Heart right ventricle (tissue), 16 donors: ENCODE measurements at regions of chr12 and their contacts with region 1.

Region 1: GRCh38 chr12:32761716-32762115 is 6.0 kb upstream of the YARS2 start:
- DNase-seq: no peak
- ATAC-seq: no peak
- H3K4me3 ChIP-seq: no peak overlapping the region
- H3K27ac ChIP-seq: no peak overlapping the region
- H3K4me1 ChIP-seq: peaks cover 0 to 5% (median 0%) of the 10 kb centered on the region in 9 donors
- H3K27me3 ChIP-seq: peaks cover 0 to 7% (median 0%) of the 10 kb centered on the region in 7 donors
- CTCF ChIP-seq: no peak

Region 2: DNA sequence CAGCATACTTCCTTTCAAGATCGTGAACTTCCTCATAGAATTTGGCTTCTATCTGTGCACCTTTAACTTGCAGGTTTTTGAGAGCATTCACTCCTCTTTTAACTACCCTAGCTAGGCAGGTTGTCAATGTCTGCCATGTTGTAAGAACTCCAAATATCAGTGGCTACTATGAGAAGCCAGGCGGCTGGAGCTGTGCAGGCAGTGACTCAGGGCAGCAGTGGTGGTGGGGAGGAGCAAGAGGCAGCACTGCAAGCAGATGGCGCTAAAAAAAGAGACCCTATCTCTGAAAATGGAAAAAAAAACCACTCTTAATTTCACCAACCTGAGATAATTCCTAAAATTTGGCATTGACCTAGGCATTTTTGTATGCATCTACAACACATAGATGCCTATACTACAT is 34.5 kb before region 1 on chr12:
- intact Hi-C with region 1: no loop called
- DNase-seq: no peak
- ATAC-seq: no peak
- H3K4me3 ChIP-seq: no peak overlapping the region
- H3K27ac ChIP-seq: no peak overlapping the region
- H3K4me1 ChIP-seq: peaks cover 0 to 10% (median 0%) of the 10 kb centered on the region in 9 donors
- H3K27me3 ChIP-seq: no peaks in the 10 kb centered on the region
- CTCF ChIP-seq: no peak

Region 3: GRCh38 chr12:32906407-32907165 is 144.9 kb after region 1 on chr12:
- intact Hi-C with region 1: loop called in 3 of 10 experiments (anchors 5 to 10 kb)
- DNase-seq: no peak
- ATAC-seq: no peak
- H3K4me3 ChIP-seq: no peak overlapping the region
- H3K27ac ChIP-seq: no peak overlapping the region
- H3K4me1 ChIP-seq: peaks cover 0 to 6% (median 0%) of the 10 kb centered on the region in 9 donors
- H3K27me3 ChIP-seq: no peaks in the 10 kb centered on the region
- CTCF ChIP-seq: no peak

Region 4: GRCh38 chr12:32918890-32919801 is 157.4 kb after region 1 on chr12:
- intact Hi-C with region 1: loop called in 8 of 10 experiments (anchors 1 to 10 kb)
- DNase-seq: peak in 1 of 2 donors; percentile 9
- ATAC-seq: peak in 5 of 8 donors; percentile 35 to 72 (median 67)
- H3K4me3 ChIP-seq: no peak overlapping the region
- H3K27ac ChIP-seq: peak overlapping the region in 1 of 10 donors; percentile 30
- H3K4me1 ChIP-seq: peaks cover 0 to 4% (median 0%) of the 10 kb centered on the region in 9 donors
- H3K27me3 ChIP-seq: no peaks in the 10 kb centered on the region
- CTCF ChIP-seq: peak; percentile 27 to 65 (median 55)

Region 5: GRCh38 chr12:34016361-34016760 is 1254.6 kb after region 1 on chr12:
- intact Hi-C with region 1: loop called in 7 of 10 experiments (anchors 2 to 10 kb)
- DNase-seq: no peak
- ATAC-seq: no peak
- H3K4me3 ChIP-seq: no peak overlapping the region
- H3K27ac ChIP-seq: no peak overlapping the region
- H3K4me1 ChIP-seq: peaks cover 0 to 6% (median 4%) of the 10 kb centered on the region in 9 donors
- H3K27me3 ChIP-seq: peaks cover 0 to 14% (median 0%) of the 10 kb centered on the region in 7 donors
- CTCF ChIP-seq: no peak